ENCODE measurements at regions of chr7 and their contacts with region 1.

Region 1: DNA sequence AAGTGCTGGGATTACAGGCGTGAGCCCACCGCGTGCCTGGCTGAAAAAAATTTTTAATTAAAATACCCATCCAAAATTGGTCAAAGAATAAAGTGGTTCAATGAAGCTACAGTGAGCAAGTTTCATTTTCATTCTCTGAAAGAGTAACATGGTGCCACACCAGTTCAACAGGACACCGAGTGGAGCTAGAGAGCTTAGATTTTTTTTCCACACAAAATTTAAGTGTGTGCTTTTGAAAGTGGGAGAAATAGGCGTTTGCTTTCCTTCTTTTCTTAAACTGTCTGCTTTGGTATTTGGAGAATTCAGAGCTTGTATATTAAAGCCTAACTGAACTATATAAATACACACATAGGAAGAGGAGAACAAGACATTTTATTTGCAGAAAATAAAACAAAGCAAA is 43.4 kb downstream of the BPGM start:
- DNase-seq: peak; percentile 53
- H3K4me3 ChIP-seq: no peak overlapping the region
- H3K27ac ChIP-seq: no peak overlapping the region
- H3K27me3 ChIP-seq: no peaks in the 10 kb centered on the region
- CTCF ChIP-seq: peak; percentile 76

Region 2: DNA sequence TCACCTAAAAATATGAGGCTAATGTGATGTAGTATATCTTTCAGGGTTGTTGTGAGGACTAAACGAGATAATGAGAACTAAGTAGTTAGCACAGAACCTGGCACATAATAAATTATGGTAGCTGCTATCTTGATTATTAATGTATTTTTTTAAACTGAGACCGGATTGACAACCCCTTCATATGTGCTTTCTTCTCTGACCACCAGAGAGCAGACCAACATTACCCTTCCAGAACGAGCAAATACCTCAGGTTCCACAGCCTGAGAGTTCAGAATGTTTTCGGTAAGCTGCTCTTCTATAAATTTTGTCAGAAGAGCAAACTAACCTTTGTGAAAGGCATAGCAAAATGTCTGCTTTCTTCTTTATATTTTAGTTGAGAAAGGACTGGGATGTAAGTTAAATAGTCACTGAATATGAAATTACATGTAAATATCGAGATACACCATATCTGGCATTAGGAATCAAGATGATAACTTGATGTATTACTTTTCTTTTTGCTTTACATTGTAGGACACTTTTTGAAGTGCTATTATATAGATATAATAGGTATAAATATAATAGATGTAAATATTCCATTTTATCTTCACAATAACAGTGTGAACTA is 57.0 kb before region 1 on chr7:
- CTCF ChIA-PET with region 1: interaction called, 18 read pairs
- POLR2A ChIA-PET with region 1: no interaction called
- DNase-seq: no peak
- H3K4me3 ChIP-seq: no peak overlapping the region
- H3K27ac ChIP-seq: no peak overlapping the region
- H3K27me3 ChIP-seq: no peaks in the 10 kb centered on the region
- CTCF ChIP-seq: peak; percentile 77

Region 3: DNA sequence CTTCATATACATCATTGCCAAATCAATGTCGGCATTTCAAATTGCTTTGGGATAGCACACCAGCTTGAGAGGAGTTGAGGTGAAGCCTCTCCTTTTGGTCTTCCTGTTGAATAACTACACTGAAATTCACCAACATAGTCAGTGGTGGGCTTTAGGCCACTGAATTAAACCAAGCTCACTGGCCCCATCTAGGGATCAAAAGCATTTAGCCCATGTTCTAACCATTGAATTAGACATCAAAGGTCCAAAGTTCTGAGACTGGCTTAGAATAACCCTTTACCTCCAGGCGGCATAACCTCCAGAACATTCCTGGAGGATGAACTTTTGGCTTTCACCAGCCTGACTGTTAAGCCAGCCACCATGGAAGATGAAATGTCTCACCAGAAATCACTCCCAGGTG is 11.3 kb after region 1 on chr7:
- CTCF ChIA-PET with region 1: interaction called, 26 read pairs
- POLR2A ChIA-PET with region 1: interaction called, 3 read pairs
- DNase-seq: no peak
- H3K4me3 ChIP-seq: no peak overlapping the region
- H3K27ac ChIP-seq: no peak overlapping the region
- H3K27me3 ChIP-seq: no peaks in the 10 kb centered on the region
- CTCF ChIP-seq: peak; percentile 57

Region 4: DNA sequence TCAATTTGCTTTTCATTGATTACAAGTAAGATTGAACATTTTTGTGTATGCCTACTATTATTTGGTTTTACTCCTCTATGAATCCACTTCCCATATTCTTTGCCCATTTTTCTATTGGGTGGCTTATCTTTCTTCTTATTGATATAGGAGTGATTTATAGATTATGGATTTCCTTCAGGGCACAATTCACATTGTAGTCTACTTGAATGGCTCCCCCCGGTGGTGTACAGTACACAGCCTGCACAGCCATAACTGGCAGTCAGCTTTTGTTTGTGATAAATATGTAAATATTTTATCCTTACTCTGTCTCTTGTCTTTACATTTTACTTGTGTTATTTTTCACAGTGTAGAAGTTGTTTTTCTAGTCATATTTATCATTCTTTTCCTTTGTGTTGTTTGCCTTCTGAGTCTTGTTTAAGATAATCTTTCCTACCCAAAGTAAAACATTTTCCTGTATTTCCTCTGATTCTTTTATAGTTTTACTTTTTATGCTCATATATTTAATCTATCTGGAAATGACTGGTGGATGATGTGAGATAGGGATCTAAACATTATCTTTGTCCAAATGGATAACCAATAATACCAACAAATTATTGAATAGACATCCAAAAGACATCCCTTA is 65.5 kb after region 1 on chr7:
- CTCF ChIA-PET with region 1: interaction called, 20 read pairs
- POLR2A ChIA-PET with region 1: interaction called, 4 read pairs
- DNase-seq: no peak
- H3K4me3 ChIP-seq: no peak overlapping the region
- H3K27ac ChIP-seq: no peak overlapping the region
- H3K27me3 ChIP-seq: no peaks in the 10 kb centered on the region
- CTCF ChIP-seq: peak; percentile 83

Region 5: DNA sequence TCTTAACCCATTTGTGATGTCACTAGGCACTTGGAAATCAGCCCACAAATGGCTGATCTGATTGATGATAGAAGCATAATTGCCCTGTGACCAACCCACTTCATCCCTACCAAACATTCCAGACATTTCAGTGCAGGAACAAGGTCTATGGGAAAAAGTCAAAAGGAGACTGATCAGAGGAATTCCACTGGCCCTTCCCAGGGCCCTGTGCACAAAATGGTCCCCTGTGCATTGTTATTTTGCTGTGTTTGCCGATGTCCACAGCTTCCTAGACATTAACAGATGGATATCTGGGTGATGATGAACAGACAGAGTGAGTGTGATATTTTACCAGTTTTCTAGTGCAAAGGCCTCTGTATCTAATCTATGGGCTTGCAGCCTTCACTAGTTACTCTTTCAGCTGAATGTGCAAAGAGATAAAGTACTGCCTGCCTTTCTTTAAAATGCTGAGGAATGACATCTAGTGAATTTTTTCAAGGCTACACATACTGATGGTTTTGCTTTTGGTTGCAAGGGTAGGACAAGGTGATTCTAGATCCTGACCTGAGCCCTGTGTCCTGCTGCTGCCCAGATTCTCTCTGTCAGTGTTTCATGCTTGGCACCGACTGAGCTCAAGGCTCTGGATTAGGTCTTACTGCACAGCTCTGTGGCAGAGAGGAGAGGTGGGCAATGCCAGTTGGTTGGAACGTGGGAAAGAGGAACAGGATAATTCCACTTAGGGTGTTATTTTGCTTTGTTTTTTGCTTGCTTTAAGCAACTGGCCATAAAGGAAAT is 144.9 kb after region 1 on chr7:
- CTCF ChIA-PET with region 1: interaction called, 12 read pairs
- POLR2A ChIA-PET with region 1: no interaction called
- DNase-seq: no peak
- H3K4me3 ChIP-seq: no peak overlapping the region
- H3K27ac ChIP-seq: peak overlapping the region; percentile 32
- H3K27me3 ChIP-seq: no peaks in the 10 kb centered on the region
- CTCF ChIP-seq: no peak

Region 6: DNA sequence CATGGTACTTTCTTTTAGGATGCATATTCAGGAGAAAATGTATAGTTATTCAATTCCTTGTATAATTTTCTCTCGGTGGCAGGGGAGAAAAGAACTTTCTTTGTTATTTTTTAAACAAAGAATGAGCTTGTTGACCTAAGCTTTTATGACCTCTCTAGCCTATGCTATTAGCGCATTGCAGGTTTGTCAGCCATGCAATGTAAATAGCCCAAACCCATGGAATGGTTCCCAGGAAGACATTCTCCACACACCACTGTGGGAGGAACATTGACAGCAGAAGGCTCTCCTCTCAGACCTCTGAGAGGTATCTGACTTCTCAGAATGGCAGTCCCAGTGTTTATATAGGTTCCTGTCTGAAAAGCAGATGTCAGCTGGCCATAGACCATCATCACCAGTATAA is 276.7 kb after region 1 on chr7:
- CTCF ChIA-PET with region 1: interaction called, 13 read pairs
- POLR2A ChIA-PET with region 1: no interaction called
- DNase-seq: no peak
- H3K4me3 ChIP-seq: no peak overlapping the region
- H3K27ac ChIP-seq: no peak overlapping the region
- H3K27me3 ChIP-seq: no peaks in the 10 kb centered on the region
- CTCF ChIP-seq: no peak

Measured in AG04450 (cell line).